Heart left ventricle (tissue), 16 donors: ENCODE measurements at regions of chr5 and their contacts with region 1.

Region 1: DNA sequence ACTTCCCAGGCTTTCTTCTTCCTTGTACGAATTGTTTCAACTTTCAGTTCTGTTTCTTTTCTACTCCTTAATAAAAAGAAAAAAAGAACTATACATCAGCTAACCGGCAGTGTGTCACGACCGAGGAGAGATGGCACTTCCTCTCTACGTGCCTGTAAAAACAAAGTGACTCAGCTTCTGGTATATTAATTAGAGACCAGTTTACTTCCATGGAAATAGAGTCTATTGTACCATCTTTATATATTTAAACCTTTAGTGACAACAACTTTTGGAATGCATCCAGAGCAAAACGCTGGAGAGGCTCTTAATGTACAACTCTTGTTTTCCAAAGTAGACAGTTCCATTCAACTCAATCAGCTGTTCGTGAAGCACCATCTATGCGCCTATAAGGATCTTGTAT is 94.5 kb upstream of the LIFR start:
- DNase-seq: no peak
- ATAC-seq: peak in 2 of 4 donors; percentile 53 to 55
- H3K4me3 ChIP-seq: peak overlapping the region in 7 of 12 donors; percentile 4 to 30 (median 18)
- H3K27ac ChIP-seq: peak overlapping the region in 2 of 12 donors; percentile 15 to 20
- H3K4me1 ChIP-seq: peaks cover 0 to 11% (median 0%) of the 10 kb centered on the region in 12 donors
- H3K27me3 ChIP-seq: no peaks in the 10 kb centered on the region
- CTCF ChIP-seq: no peak
- POLR2A ChIP-seq: no peak

Region 2: GRCh38 chr5:38598994-38599611 is 51.8 kb before region 1 on chr5:
- intact Hi-C with region 1: loop called in 2 of 10 experiments (anchors 5 kb)
- DNase-seq: no peak
- ATAC-seq: no peak
- H3K4me3 ChIP-seq: no peak overlapping the region
- H3K27ac ChIP-seq: peak overlapping the region in 1 of 12 donors; percentile 32
- H3K4me1 ChIP-seq: peaks cover 3 to 59% (median 34%) of the 10 kb centered on the region in 12 donors
- H3K27me3 ChIP-seq: no peaks in the 10 kb centered on the region
- CTCF ChIP-seq: no peak
- POLR2A ChIP-seq: no peak

Region 3: DNA sequence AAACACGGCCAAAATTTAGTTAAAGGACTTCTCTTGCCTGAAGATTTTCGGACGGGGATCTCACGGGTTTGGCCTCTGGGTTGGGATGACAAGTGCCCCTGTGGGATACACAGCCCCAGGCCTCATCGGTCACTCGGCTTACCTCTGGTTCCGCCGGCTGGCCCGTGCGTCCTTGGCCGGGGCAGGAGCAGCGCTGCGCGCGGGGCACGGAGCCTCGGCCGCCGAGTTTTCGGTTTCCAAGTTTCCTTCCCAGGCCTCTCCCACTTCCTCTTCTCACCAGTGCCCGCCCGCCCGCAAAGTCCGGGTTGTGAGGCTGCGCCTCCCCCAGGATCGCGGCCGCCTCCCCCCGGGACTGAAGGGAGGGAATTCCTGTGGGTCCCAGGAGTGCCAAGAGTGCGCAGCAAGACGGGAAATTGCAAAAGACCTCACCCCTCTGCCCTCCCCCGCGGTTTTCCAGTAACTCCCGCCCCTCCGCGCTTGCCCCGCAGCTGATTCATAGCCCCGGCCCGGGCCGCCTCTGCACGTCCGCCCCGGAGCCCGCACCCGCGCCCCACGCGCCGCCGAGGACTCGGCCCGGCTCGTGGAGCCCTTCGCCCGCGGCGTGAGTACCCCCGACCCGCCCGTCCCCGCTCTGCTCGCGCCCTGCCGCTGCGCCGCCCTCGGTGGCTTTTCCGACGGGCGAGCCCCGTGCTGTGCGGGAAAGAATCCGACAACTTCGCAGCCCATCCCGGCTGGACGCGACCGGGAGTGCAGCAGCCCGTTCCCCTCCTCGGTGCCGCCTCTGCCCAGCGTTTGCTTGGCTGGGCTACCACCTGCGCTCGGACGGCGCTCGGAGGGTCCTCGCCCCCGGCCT is 194.8 kb after region 1 on chr5 and contains the start of gene OSMR:
- intact Hi-C with region 1: no loop called
- DNase-seq: peak; percentile 91 to 95 (median 93)
- ATAC-seq: peak; percentile 90 to 97 (median 96)
- H3K4me3 ChIP-seq: peak within 1 kb of the TSS; percentile 52 to 88 (median 74)
- H3K27ac ChIP-seq: peak within 1 kb of the TSS; percentile 87 to 96 (median 93)
- H3K4me1 ChIP-seq: peaks cover 0 to 43% (median 5%) of the 10 kb centered on the region in 12 donors
- H3K27me3 ChIP-seq: peaks cover 0 to 35% (median 4%) of the 10 kb centered on the region in 9 donors
- CTCF ChIP-seq: peak in 2 of 12 donors; percentile 8
- POLR2A ChIP-seq: peak in 1 of 2 donors; percentile 53
- total RNA-seq, gene OSMR: 8.1 to 39.2 (median 12.0) TPM